A673 (cell line): ENCODE measurements at regions of chr11 and their contacts with region 1.

Region 1: DNA sequence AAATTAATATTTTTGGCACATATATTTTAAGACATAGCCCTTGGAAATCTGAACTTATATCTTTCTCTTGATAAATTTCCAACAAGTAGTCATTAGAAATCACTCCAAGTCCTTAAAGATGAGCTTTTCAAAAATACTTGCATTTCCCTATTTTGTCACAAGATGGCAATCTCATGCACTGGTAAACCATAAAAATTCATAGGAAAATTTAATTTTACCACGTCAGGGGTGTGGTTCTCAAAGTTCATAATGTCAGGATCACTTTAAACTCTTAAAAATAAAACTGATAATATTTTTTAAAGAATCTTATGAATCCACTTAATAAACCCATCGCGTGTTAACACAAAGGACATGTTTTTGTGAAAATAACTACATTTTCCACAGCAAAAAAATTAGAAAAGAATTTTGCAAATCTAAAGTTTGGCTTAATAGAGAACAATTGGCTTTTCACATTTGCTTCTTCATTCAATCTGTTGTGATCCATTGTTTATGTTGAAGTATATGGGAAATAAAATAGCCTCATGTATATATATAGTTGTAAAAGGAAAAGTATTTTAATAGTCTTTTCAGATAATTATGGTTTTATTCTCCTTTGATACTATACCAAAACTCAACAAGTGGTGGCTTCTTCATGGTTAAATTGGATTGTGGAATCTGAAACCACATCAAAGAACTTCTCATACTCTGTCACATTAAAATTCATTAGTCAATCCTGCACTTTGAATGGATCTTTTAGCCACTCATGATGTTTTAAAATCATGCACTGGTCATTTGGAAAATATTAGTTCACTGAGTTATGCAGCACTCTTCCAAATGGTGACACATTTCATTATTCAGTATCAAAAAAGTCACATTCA is 169.1 kb downstream of the CADM1 start:
- DNase-seq: peak; percentile 51
- H3K4me3 ChIP-seq: no peak overlapping the region
- H3K27ac ChIP-seq: no peak overlapping the region
- H3K4me1 ChIP-seq: peaks cover 28% of the 10 kb centered on the region
- H3K27me3 ChIP-seq: peaks cover 6% of the 10 kb centered on the region
- CTCF ChIP-seq: peak; percentile 85

Region 2: DNA sequence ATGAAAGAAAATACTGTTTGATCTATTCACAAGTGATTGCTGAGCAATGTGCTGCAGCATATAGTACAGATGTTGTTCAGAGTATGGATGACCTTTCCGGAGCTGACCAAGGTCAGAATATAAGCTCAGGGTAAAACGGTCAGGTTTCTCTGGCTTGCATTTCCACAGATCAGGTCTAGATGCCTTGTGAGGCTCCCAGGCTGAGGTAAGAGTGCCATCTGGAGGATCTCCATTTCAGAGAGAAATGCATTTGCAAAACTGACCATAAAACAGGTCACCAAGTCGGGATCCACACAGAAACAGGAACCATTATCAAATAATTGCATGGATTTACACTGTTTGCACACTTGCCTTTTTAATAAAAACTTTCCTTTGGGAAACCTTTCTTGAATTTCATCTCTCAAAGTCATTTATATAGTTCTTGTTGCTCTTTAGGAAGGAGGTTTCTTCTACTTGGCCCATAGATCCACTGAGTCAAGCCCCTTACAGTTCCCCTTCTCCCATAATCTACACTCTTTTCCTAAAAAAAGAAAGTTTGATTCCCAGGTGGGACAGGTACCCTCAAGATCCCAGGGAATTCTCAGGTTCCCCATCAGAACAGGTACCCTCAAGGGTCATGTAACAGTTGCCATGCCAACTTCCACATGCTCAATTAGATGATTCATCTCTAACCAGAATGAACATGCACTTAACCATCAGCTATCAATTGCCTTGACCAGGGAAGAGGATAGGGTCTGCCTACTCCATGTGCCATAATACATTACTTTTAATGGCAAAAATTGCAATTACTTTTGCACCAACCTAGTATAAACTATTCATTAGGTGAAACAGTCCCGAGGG is 1604.1 kb before region 1 on chr11:
- CTCF ChIA-PET with region 1: no interaction called
- POLR2A ChIA-PET with region 1: no interaction called
- intact Hi-C with region 1: no loop called
- DNase-seq: peak; percentile 54
- H3K4me3 ChIP-seq: no peak overlapping the region
- H3K27ac ChIP-seq: no peak overlapping the region
- H3K4me1 ChIP-seq: no peaks in the 10 kb centered on the region
- H3K27me3 ChIP-seq: no peaks in the 10 kb centered on the region
- CTCF ChIP-seq: peak; percentile 60

Region 3: DNA sequence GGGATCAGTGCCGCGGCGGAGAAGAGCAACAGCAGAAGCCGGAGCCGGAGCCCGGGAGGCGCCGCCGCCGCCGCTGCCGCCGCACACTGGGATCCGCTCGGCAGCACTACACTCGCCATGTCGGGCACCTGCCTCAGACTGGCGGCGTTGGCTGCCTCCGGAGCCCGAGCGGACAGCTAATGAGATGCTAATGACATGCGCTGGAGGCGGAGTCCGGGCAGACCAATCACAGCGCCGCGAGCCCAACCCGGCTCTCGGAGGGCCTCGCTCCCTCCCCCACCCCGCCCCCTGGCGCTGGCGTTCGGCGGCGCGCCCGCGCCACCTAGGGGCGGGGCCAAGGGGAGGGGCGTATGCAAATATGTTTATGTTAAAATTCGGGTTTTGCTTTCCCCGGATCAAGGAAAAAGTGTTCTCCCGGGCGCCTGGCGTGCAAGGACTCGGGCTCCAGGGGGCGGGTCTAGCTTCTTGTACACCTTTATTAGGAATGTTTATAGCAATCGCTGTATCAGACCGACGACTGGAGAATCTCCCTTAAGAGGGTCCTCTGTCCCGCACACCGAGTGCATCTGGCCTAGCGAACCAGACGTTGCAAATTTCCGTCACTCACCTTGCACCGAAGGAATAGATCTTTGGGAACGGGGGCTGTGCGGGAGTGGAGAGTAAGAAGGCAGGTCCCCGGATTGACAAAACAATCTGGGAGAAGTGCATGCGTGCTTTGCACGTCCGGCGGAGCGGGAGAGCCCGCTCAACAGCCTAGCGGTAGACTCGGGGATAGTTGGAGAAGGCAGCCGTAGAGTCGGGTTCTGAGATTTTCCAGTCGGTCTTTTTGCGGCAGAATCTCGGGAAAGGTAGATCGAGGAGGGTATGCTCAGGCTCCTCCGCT is 169.4 kb after region 1 on chr11 and contains the start of gene CADM1:
- CTCF ChIA-PET with region 1: interaction called, 10 read pairs
- POLR2A ChIA-PET with region 1: no interaction called
- intact Hi-C with region 1: loop called (anchors 1 kb)
- DNase-seq: peak; percentile 97
- H3K4me3 ChIP-seq: peak within 1 kb of the TSS; percentile 54
- H3K27ac ChIP-seq: peak within 1 kb of the TSS; percentile 35
- H3K4me1 ChIP-seq: peaks cover 18% of the 10 kb centered on the region
- H3K27me3 ChIP-seq: peaks cover 71% of the 10 kb centered on the region
- CTCF ChIP-seq: peak; percentile 52; the same call in 1 of the 2 replicates
- total RNA-seq, gene CADM1: 10.4 and 12.9 TPM in 2 replicates

Region 4: DNA sequence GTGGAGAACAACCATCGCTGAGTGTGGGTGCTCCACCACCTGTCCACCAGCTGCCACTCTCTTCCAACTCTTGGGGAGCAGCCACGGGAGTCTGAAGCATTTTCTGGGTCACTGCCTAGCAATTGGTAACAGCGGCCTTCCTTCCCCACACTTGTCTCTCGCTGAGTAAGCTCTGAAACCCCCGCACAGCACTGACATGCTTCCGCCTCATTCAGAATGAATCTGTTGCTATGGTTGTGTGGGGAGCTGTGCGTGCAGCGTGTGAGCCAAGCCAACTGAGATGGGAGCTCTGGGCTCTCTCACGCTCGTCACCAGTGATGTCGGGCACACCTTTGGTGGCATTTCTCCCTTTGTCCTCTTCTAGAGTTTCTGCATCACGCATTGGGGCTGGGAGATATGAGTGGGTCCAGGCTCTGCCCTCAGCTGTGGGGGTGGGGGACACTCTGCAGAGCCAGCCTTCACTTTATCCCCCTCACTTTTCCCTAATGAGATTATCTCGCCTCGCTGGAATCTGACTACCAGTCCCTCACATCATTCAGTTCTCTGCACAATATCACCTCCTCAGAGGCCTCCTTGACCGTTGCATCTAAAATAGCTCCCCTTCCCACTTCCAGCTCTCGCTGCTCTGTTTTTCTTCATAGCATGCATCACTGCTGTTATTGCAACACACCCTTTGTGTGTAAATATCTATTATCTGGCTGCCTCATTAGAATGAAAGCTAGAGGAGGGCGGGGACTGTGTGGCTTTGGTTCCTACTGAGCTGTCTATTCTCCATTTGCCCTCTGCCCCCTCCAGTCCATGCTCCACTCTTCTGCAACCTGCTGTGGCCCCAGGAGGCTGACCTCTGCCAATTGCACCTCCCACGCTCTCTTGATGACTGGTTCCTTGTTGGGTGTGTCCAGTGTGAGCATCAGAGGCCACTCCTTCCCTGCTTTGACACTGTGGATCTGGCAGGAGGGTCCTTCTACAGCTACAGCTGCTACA is 739.0 kb after region 1 on chr11:
- CTCF ChIA-PET with region 1: no interaction called
- POLR2A ChIA-PET with region 1: no interaction called
- intact Hi-C with region 1: loop called (anchors 5 kb)
- DNase-seq: no peak
- H3K4me3 ChIP-seq: no peak overlapping the region
- H3K27ac ChIP-seq: no peak overlapping the region
- H3K4me1 ChIP-seq: no peaks in the 10 kb centered on the region
- H3K27me3 ChIP-seq: peaks cover 9% of the 10 kb centered on the region
- CTCF ChIP-seq: no peak

Region 5: DNA sequence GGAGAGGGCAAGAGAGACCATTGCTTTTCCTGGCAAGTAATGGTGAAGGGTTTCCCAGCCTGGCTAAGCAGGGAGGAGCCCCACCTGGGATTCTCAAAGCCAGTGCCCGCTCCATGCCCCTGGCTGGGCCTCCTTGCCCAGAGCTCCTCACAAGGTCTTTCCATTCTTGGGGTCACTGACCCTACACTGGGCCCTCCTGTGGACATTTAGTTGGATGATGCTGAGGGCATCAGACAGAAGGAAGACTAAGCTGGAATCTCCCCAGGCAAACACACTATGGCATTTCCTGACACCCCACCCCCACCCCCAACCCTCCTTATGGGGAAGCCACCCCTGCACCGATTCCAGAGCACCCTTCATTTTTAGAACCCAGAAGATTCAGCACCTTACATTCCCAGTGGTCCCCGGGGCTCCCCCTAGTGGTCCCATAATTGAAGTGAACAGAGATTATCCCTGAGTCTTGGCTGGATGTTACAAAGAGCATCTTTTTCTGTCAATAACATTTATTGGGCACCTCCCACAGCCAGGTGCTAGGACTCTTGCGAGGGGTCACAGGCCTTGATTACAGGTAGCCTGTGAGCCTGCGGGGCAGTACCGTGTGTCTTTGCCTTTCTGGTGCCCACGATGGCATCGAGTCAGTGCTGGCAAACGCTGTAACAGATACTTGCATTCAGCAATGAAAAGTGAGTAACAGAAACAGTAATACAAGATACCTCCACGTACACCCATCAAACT is 889.2 kb after region 1 on chr11:
- CTCF ChIA-PET with region 1: no interaction called
- POLR2A ChIA-PET with region 1: no interaction called
- intact Hi-C with region 1: loop called (anchors 5 kb)
- DNase-seq: peak; percentile 72
- H3K4me3 ChIP-seq: no peak overlapping the region
- H3K27ac ChIP-seq: no peak overlapping the region
- H3K4me1 ChIP-seq: no peaks in the 10 kb centered on the region
- H3K27me3 ChIP-seq: no peaks in the 10 kb centered on the region
- CTCF ChIP-seq: peak; percentile 88

Region 6: DNA sequence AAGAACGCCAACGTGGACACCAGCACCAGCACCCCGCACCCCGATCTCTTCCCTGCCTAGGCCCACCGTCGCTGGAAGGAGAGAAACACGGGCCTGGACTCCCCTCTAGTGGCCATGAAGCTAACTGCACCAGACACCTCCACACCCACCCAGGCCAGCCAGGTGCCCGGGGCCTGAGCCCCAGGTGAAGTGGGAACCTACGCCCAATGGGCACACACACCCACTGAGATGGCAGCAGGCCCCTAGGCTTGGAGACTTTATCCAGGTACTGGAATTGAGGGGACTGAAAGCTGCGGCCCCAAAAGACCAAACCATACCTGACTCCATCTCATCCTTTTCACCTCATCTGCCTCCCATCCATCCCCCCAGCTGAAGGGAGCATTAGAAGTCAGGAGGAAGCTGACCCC is 1356.6 kb after region 1 on chr11:
- CTCF ChIA-PET with region 1: interaction called, 3 read pairs
- POLR2A ChIA-PET with region 1: no interaction called
- intact Hi-C with region 1: loop called (anchors 5 kb)
- DNase-seq: peak; percentile 61
- H3K4me3 ChIP-seq: no peak overlapping the region
- H3K27ac ChIP-seq: no peak overlapping the region
- H3K4me1 ChIP-seq: no peaks in the 10 kb centered on the region
- H3K27me3 ChIP-seq: peaks cover 12% of the 10 kb centered on the region
- CTCF ChIP-seq: peak; percentile 95